Ascending aorta (tissue), 2 donors: ENCODE measurements at regions of chr6 and their contacts with region 1.

Region 1: GRCh38 chr6:26363882-26364701 is 906 bp upstream of the BTN3A2 start:
- DNase-seq: no peak
- H3K4me3 ChIP-seq: peak overlapping the region; percentile 72 to 79
- H3K27ac ChIP-seq: peak overlapping the region; percentile 64 to 83
- H3K4me1 ChIP-seq: peaks cover 0 to 8% of the 10 kb centered on the region in 2 donors
- H3K27me3 ChIP-seq: no peaks in the 10 kb centered on the region
- CTCF ChIP-seq: no peak

Region 2: DNA sequence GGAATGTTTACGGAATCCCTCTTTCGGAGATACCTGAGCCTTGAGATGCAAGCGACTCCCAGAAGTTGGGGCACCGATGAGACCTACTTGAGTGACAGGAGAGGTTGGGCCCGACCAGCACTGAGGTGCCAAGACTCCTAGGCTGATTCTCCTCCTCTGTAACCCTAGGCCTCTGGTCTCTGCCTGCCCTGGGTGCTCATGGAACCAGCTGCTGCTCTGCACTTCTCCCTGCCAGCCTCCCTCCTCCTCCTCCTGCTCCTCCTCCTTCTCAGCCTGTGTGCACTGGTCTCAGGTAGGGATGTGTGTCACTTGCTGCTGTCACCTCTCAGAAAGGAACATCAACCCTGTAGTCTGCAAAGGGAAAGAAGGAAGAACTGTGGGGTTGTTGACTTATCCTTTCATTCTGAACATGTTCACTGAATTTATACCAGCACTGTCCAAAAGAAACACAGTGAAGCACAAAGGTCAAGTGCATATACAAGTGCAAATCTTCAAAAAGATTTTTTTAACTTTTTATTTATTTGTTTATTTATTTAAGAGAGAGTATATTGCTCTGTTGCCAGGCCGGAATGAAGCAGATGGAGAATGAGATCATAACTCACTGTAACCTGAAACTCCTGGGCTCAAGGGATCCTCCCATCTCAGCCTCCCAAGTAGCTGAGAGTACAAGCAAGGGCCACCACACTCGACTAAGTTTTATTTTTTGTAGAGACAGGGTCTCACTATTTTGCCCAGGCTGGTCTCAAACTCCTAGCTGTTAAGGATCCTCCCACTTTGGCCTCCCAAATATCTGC is 19.7 kb after region 1 on chr6:
- intact Hi-C with region 1: loop called (anchors 1 kb)
- DNase-seq: peak in 1 of 2 donors; percentile 66
- H3K4me3 ChIP-seq: peak overlapping the region; percentile 69 to 76
- H3K27ac ChIP-seq: peak overlapping the region; percentile 67 to 68
- H3K4me1 ChIP-seq: peaks cover 0 to 2% of the 10 kb centered on the region in 2 donors
- H3K27me3 ChIP-seq: no peaks in the 10 kb centered on the region
- CTCF ChIP-seq: no peak

Region 3: DNA sequence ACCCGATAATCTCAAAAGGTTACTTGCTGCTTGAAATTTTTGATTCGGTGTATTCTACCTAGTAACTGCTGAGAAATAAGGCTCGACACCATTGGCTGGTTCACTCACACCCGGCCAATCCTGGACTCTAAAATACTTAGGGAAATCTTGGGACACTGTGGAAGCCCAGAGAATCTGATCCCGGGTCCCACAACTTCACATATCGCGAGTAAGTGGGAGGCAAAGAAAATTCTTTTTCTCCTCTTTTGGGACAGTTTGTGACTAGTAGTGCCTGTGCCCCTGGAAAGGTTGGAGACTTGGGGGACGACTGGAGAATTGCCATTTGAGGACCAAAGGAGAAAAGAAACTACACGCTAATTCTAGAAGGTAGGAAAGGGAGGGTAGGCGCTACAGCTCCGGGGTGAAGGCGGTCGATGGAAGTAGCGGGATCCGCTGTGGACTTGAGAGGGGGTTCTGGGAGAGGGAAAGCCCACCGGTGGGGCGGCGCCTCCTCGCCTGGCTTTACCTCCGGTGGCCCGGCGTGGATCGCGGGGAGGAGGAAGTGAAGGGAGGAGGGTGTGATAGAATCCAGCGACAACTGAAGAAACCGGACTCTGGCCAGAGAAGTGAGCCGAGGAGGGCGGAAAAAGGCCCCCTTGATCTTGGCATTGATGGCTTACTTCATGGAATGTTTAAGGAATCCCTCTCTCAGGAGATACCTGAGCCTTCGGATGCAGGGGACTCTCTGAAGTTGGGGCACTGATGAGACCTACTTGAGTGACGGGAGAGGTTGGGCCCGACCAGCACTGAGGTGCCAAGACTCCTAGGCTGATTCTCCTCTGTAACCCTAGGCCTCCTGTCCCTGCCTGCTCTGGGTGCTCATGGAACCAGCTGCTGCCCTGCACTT is 57.4 kb after region 1 on chr6:
- intact Hi-C with region 1: loop called (anchors 5 kb)
- DNase-seq: peak; percentile 38 to 87
- H3K4me3 ChIP-seq: peak overlapping the region; percentile 52 to 97
- H3K27ac ChIP-seq: peak overlapping the region; percentile 75 to 95
- H3K4me1 ChIP-seq: peaks cover 5 to 35% of the 10 kb centered on the region in 2 donors
- H3K27me3 ChIP-seq: no peaks in the 10 kb centered on the region
- CTCF ChIP-seq: no peak

Region 4: DNA sequence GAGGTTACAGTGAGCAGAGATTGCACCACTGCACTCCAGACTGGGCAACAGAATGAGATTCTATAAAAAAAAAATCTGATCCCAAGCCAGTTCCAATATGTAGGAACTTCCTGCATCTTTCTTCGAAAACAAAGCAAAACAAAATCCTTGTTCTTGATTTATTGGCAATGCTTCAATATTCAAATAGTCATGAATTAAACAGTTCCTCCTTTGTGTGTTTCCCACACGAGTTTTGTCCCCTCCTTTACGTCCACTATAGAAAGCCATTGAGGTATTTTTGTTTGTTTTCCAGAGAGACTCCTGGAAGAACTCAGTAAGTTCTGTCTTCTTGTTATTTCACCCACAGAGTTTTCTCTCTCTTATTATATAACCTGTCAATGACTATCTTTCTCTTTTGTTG is 143.6 kb after region 1 on chr6:
- intact Hi-C with region 1: no loop called
- DNase-seq: no peak
- H3K4me3 ChIP-seq: no peak overlapping the region
- H3K27ac ChIP-seq: no peak overlapping the region
- H3K4me1 ChIP-seq: no peaks in the 10 kb centered on the region
- H3K27me3 ChIP-seq: no peaks in the 10 kb centered on the region
- CTCF ChIP-seq: no peak